ENCODE measurements at regions of chr3 and their contacts with region 1.

Region 1: DNA sequence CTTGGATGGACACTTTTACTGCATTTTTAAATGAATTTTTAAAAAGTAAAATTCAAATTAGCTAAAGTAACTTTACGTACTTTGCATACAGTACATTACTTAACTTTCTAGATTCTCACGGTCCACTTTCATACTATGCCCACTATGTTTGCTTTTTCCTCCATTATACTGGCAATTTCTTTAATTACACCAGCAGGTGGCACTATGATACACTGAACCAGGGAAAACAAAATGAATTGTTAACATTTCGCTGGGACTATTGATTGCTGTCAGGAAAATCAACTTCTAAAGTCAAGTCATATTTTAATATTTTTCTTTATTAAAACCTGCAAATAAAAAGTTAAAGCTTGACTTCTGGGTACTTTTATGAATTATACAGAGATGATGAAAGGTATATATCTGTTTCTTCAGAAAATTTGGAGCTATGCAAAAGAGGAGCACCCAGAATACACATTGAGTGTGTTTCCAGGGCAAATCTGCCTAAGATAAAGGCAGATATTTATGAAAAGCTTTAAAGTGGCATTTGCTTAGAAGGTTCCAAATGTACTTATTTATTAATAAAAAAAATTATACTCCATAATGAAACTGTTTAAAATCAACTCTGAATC is 21.8 kb upstream of the POU1F1 start:
- DNase-seq: peak; percentile 80
- ATAC-seq: peak; percentile 80
- H3K4me3 ChIP-seq: no peak overlapping the region
- H3K27ac ChIP-seq: no peak overlapping the region
- H3K4me1 ChIP-seq: no peaks in the 10 kb centered on the region
- H3K27me3 ChIP-seq: no peaks in the 10 kb centered on the region
- CTCF ChIP-seq: peak; percentile 92

Region 2: GRCh38 chr3:87503900-87504508 is 205.8 kb after region 1 on chr3:
- CTCF ChIA-PET with region 1: interaction called, 3 read pairs
- POLR2A ChIA-PET with region 1: no interaction called
- intact Hi-C with region 1: loop called (anchors 1 kb)
- DNase-seq: peak; percentile 92
- ATAC-seq: peak; percentile 54
- H3K4me3 ChIP-seq: no peak overlapping the region
- H3K27ac ChIP-seq: no peak overlapping the region
- H3K4me1 ChIP-seq: peaks cover 34% of the 10 kb centered on the region
- H3K27me3 ChIP-seq: no peaks in the 10 kb centered on the region
- CTCF ChIP-seq: peak; percentile 96

Region 3: GRCh38 chr3:87607234-87607633 is 309.0 kb after region 1 on chr3:
- CTCF ChIA-PET with region 1: no interaction called
- POLR2A ChIA-PET with region 1: no interaction called
- intact Hi-C with region 1: no loop called
- DNase-seq: no peak
- ATAC-seq: no peak
- H3K4me3 ChIP-seq: no peak overlapping the region
- H3K27ac ChIP-seq: no peak overlapping the region
- H3K4me1 ChIP-seq: no peaks in the 10 kb centered on the region
- H3K27me3 ChIP-seq: no peaks in the 10 kb centered on the region
- CTCF ChIP-seq: no peak

Region 4: DNA sequence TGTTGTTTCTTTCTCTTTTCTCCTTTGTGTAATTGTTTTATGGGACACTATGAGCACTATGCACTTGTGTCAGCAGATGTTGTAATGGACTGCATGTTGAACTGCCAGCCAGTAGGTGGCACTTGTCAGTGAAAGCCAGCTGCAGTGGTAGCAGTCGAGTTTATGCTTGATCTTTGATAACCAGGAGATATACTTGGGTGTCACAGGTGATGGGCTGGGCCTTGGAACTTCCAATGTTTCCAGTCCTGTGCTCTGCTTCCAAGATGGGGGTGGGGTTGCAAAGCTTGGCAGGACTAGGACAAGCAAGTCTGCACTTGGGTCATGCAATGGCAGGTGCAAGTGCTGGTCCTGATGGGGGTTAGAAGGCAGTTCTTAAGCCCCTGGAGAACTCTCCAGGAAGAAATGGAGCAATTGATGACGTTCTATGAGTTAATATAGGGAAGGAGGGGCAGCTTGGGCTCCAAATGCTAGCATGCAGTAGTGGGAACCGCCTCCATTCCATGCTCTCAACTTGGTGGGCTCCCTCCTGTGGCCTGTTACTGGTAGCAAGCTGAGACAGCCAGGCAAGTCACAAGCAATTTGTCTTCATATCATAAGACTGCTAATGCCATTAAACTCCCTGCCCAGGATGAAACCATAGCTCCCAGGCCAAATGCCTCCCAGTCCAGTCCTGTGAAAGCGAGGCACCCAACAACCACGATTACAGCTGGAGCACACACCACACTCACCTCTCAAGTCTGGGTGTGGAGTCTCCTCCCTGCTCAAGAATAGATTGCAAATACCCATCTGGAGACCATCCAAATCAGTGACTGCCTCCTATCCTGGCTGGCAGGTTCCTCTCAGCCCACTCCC is 473.4 kb after region 1 on chr3:
- CTCF ChIA-PET with region 1: interaction called, 5 read pairs
- POLR2A ChIA-PET with region 1: no interaction called
- intact Hi-C with region 1: loop called (anchors 10 kb)
- DNase-seq: peak; percentile 62
- ATAC-seq: peak; percentile 56
- H3K4me3 ChIP-seq: no peak overlapping the region
- H3K27ac ChIP-seq: no peak overlapping the region
- H3K4me1 ChIP-seq: peaks cover 5% of the 10 kb centered on the region
- H3K27me3 ChIP-seq: no peaks in the 10 kb centered on the region
- CTCF ChIP-seq: peak; percentile 90